Thyroid gland (tissue), 4 donors: ENCODE measurements at regions of chr10 and their contacts with region 1.

Region 1: GRCh38 chr10:26642896-26643653 is 54.4 kb upstream of the PDSS1 start:
- DNase-seq: no peak
- H3K4me3 ChIP-seq: no peak overlapping the region
- H3K27ac ChIP-seq: no peak overlapping the region
- H3K4me1 ChIP-seq: no peaks in the 10 kb centered on the region
- H3K27me3 ChIP-seq: no peaks in the 10 kb centered on the region
- CTCF ChIP-seq: no peak
- POLR2A ChIP-seq: no peak

Region 2: GRCh38 chr10:26839966-26840627 is 197.0 kb after region 1 on chr10:
- intact Hi-C with region 1: no loop called
- DNase-seq: peak; percentile 24 to 28
- H3K4me3 ChIP-seq: no peak overlapping the region
- H3K27ac ChIP-seq: no peak overlapping the region
- H3K4me1 ChIP-seq: peaks cover 10 to 17% of the 10 kb centered on the region in 2 donors
- H3K27me3 ChIP-seq: no peaks in the 10 kb centered on the region
- CTCF ChIP-seq: no peak
- POLR2A ChIP-seq: no peak

Region 3: DNA sequence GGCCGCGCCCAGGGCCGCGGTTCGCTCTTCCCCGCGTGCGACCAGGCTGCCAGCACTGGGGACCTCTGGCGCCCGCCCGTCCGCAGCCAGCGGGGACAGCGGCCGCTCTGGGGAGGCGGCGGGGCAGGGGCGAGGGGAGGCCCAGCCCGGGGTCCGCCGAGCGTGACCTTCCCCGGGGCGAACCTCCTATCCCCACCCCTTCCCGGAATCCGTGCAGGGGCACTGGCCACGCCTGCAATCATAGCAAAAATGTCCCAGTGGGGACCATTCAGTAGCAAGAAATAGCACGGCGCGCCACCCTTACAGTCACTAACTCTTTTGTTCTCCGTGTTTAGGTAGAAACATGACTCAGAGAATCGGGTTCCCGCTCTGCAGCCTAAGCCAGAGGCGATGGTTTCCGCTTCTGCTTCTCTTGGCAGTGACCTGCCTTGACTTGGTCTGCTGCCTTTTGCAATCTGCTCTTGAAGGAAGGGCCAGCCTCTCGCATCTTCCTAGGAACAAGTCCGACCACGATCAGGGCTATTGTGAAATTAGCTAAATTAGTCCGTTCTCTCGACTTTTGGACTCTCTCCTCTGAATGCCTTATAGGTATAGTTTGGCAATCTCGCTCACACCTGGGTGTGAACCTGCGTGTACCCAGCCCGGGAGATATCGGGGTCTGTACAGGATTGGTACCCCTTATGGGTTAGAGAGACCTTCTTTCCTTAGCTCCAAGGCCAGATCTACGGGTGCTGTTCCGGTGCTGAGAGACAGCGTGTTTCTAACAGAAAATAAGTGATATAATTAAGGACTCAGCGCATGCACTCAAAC is 676.9 kb after region 1 on chr10:
- intact Hi-C with region 1: loop called (anchors 10 kb)
- DNase-seq: peak; percentile 69 to 81
- H3K4me3 ChIP-seq: peak overlapping the region in 2 of 3 donors; percentile 14 to 22
- H3K27ac ChIP-seq: peak overlapping the region; percentile 65 to 81 (median 73)
- H3K4me1 ChIP-seq: peaks cover 4 to 5% of the 10 kb centered on the region in 2 donors
- H3K27me3 ChIP-seq: no peaks in the 10 kb centered on the region
- CTCF ChIP-seq: no peak
- POLR2A ChIP-seq: peak in 1 of 2 donors; percentile 36